ENCODE measurements at regions of chr16 and their contacts with region 1.

Region 1: GRCh38 chr16:67521095-67521804 is 7.4 kb upstream of the RIPOR1 start:
- DNase-seq: peak; percentile 100
- ATAC-seq: peak; percentile 93
- H3K4me3 Mint-ChIP-seq: peak overlapping the region; percentile 81
- H3K27ac Mint-ChIP-seq: peak overlapping the region; percentile 99
- H3K4me1 Mint-ChIP-seq: peaks cover 16% of the 10 kb centered on the region
- H3K27me3 Mint-ChIP-seq: no peaks in the 10 kb centered on the region
- CTCF ChIP-seq: peak; percentile 98

Region 2: GRCh38 chr16:67449336-67449735 is 71.9 kb before region 1 on chr16:
- CTCF ChIA-PET with region 1: no interaction called
- POLR2A ChIA-PET with region 1: no interaction called
- intact Hi-C with region 1: no loop called
- DNase-seq: no peak
- ATAC-seq: no peak
- H3K4me3 Mint-ChIP-seq: no peak overlapping the region
- H3K27ac Mint-ChIP-seq: no peak overlapping the region
- H3K4me1 Mint-ChIP-seq: no peaks in the 10 kb centered on the region
- H3K27me3 Mint-ChIP-seq: no peaks in the 10 kb centered on the region
- CTCF ChIP-seq: no peak

Region 3: GRCh38 chr16:67490335-67491096 is 30.7 kb before region 1 on chr16:
- CTCF ChIA-PET with region 1: interaction called, 142 read pairs
- POLR2A ChIA-PET with region 1: interaction called, 3 read pairs
- intact Hi-C with region 1: no loop called
- DNase-seq: no peak
- ATAC-seq: no peak
- H3K4me3 Mint-ChIP-seq: no peak overlapping the region
- H3K27ac Mint-ChIP-seq: no peak overlapping the region
- H3K4me1 Mint-ChIP-seq: peaks cover 5% of the 10 kb centered on the region
- H3K27me3 Mint-ChIP-seq: no peaks in the 10 kb centered on the region
- CTCF ChIP-seq: no peak

Region 4: DNA sequence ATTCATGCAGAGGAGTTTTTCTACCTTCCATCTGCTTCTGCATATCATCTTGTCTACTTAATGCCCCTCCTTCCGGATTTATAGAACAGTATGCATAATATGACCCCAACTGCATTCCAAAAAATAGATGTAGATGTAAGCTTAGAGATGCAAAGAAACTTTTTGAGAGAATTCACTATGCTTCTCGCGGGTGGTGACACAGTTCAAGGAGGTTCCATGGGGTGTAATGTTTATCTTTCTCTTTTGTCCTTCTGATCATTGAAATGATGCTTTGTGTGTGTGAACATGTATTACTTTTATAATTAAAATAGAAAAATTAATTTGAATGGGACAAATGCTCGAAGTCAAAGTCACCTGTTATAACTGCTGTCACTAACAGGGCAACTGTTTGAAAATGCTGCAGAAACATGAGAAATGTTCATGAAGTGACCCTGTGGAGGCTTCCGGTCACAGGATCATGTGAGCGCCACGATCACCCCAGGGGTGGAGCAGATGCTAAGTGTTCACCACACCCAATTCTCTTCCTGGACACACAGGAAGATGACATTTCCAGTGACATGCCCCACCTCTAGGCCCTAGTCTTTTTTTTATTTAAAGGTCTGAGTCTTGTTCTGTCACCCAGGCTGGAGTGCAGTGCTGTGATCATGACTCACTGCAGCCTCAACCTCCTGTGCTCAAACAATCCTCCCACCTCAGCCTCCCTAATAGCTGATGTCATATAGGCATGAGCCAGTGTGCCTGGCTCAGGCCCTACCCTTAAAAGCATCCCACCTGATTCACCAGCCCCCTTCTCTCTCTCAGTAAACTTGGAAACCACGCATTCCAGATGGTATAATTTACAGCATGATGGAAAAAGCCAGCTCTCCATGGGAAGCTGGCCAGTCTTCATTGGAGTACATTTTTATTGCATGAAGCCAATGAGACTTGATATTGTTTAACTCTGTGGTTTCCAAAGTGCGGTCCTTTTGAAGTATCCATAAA is 16.9 kb before region 1 on chr16:
- CTCF ChIA-PET with region 1: interaction called, 41 read pairs
- POLR2A ChIA-PET with region 1: interaction called, 4 read pairs
- intact Hi-C with region 1: no loop called
- DNase-seq: peak; percentile 75
- ATAC-seq: peak; percentile 97
- H3K4me3 Mint-ChIP-seq: no peak overlapping the region
- H3K27ac Mint-ChIP-seq: peak overlapping the region; percentile 83
- H3K4me1 Mint-ChIP-seq: peaks cover 40% of the 10 kb centered on the region
- H3K27me3 Mint-ChIP-seq: no peaks in the 10 kb centered on the region
- CTCF ChIP-seq: no peak

Region 5: GRCh38 chr16:67546761-67547422 is 25.6 kb after region 1 on chr16:
- CTCF ChIA-PET with region 1: interaction called, 34 read pairs
- POLR2A ChIA-PET with region 1: interaction called, 5 read pairs
- intact Hi-C with region 1: no loop called
- DNase-seq: peak; percentile 79
- ATAC-seq: peak; percentile 32
- H3K4me3 Mint-ChIP-seq: no peak overlapping the region
- H3K27ac Mint-ChIP-seq: peak overlapping the region; percentile 90
- H3K4me1 Mint-ChIP-seq: peaks cover 40% of the 10 kb centered on the region
- H3K27me3 Mint-ChIP-seq: no peaks in the 10 kb centered on the region
- CTCF ChIP-seq: peak; percentile 99

Region 6: DNA sequence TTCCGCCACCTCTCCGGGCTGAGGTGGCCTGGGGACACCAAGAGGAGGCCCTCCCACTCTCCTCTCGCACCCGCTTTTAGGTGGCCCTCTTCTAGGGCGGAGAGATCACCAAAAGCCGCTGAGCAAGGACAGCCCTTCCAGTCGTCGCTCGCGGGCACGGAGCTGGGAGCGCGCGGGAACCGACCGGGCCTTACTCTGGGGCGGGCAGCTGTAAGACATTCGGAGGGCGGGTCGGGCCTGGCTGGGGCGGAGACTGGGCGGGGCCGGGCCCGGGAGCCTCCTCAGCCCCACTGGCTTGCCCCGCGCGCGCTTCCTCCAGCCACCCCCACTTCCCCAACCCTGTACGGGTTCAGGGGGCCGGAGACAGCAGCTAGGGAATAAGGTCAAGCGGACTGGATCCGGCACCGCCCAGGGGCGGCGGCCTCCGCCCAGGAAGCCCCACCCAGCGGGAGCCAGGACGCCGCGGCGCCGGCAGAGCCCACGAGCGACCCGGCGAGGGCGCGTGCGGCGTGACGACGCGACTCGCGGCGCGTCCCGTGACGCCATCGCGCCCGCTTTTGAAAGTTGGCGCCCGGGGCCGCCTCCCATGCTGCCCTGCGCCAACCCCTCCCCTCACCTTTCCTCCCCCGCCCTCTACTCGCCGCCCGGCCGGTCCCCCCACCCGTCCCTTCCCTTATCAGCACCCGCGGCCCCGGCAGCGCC is 40.7 kb after region 1 on chr16:
- CTCF ChIA-PET with region 1: interaction called, 24 read pairs
- POLR2A ChIA-PET with region 1: interaction called, 3 read pairs
- intact Hi-C with region 1: no loop called
- DNase-seq: peak; percentile 98
- ATAC-seq: peak; percentile 88
- H3K4me3 Mint-ChIP-seq: peak overlapping the region; percentile 82
- H3K27ac Mint-ChIP-seq: peak overlapping the region; percentile 91
- H3K4me1 Mint-ChIP-seq: peaks cover 44% of the 10 kb centered on the region
- H3K27me3 Mint-ChIP-seq: no peaks in the 10 kb centered on the region
- CTCF ChIP-seq: no peak

Region 7: GRCh38 chr16:67613808-67614207 is 92.6 kb after region 1 on chr16:
- CTCF ChIA-PET with region 1: interaction called, 11 read pairs
- POLR2A ChIA-PET with region 1: no interaction called
- intact Hi-C with region 1: no loop called
- DNase-seq: peak; percentile 51
- ATAC-seq: no peak
- H3K4me3 Mint-ChIP-seq: no peak overlapping the region
- H3K27ac Mint-ChIP-seq: no peak overlapping the region
- H3K4me1 Mint-ChIP-seq: peaks cover 2% of the 10 kb centered on the region
- H3K27me3 Mint-ChIP-seq: no peaks in the 10 kb centered on the region
- CTCF ChIP-seq: no peak

Region 8: GRCh38 chr16:67667817-67668494 is 146.7 kb after region 1 on chr16:
- CTCF ChIA-PET with region 1: interaction called, 154 read pairs
- POLR2A ChIA-PET with region 1: interaction called, 3 read pairs
- intact Hi-C with region 1: no loop called
- DNase-seq: peak; percentile 92
- ATAC-seq: peak; percentile 92
- H3K4me3 Mint-ChIP-seq: peak overlapping the region; percentile 80
- H3K27ac Mint-ChIP-seq: no peak overlapping the region
- H3K4me1 Mint-ChIP-seq: peaks cover 11% of the 10 kb centered on the region
- H3K27me3 Mint-ChIP-seq: no peaks in the 10 kb centered on the region
- CTCF ChIP-seq: peak; percentile 73

Measured in activated CD8-positive, alpha-beta T cell treated with anti-CD3 and anti-CD28 coated beads for 36 hours (primary cell).